ENCODE measurements at regions of chr4 and their contacts with region 1.

Region 1: GRCh38 chr4:109998867-109999584 is 86.3 kb downstream of the EGF start:
- DNase-seq: peak; percentile 53
- H3K27ac ChIP-seq: no peak overlapping the region
- CTCF ChIP-seq: peak; percentile 70

Region 2: GRCh38 chr4:110510955-110511544 is 512.0 kb after region 1 on chr4:
- CTCF ChIA-PET with region 1: interaction called, 27 read pairs
- POLR2A ChIA-PET with region 1: no interaction called
- DNase-seq: peak; percentile 34
- H3K27ac ChIP-seq: no peak overlapping the region
- CTCF ChIP-seq: peak; percentile 72